Posterior cingulate gyrus (tissue), 11 donors: ENCODE measurements at regions of chr7 and their contacts with region 1.

Region 1: GRCh38 chr7:66654123-66654732 is 25.5 kb downstream of the KCTD7 start:
- DNase-seq: peak; percentile 97 to 100 (median 98)

Region 2: GRCh38 chr7:66591799-66592596 is 62.2 kb before region 1 on chr7:
- intact Hi-C with region 1: loop called (anchors 10 kb)
- DNase-seq: peak; percentile 89 to 99 (median 94)

Region 3: GRCh38 chr7:66681491-66682349 is 27.5 kb after region 1 on chr7:
- intact Hi-C with region 1: loop called (anchors 1 kb)
- DNase-seq: peak; percentile 93 to 99 (median 98)